CD4-positive, alpha-beta memory T cell (primary cell): ENCODE measurements at regions of chr2 and their contacts with region 1.

Region 1: DNA sequence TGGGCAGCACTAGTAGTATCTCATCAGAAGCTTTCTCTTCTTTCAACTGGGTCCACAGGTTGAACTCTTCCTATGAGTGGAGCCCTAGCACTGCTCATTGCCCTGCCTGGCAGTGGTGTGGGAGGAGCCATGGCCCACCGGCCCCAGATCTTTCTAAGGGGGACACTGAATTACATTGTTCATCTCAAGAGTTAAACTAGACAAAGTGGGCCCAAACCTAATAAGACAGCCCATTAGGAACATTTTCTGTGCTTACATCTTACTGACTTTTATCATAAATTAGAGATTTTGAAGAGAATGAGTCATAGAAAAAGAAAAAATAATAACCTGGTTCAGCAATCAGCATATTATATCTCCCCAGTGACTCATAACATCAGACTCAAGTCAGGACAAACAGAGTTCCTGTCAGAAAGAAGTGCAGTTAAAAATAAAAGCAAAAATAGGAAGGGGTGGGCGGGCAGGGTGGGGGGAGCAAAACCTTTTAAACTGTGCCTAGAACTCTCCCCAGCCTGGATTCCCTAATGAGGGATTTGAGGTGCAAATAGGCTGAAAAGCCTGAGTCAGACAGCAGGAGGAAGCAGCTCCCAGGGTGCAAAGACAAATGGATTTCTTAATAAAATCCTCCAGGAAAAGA is 161.6 kb upstream of the TRIB2 start:
- DNase-seq: peak in 2 of 5 donors; percentile 18 to 19
- H3K4me3 ChIP-seq: no peak overlapping the region
- H3K4me3 Mint-ChIP-seq: peak overlapping the region; percentile 6 to 75 (median 56)
- H3K27ac ChIP-seq: no peak overlapping the region
- H3K27ac Mint-ChIP-seq: peak overlapping the region; percentile 74 to 94 (median 87)
- H3K4me1 ChIP-seq: peaks cover 31% of the 10 kb centered on the region
- H3K4me1 Mint-ChIP-seq: peaks cover 33 to 49% (median 38%) of the 10 kb centered on the region in 4 donors
- H3K27me3 ChIP-seq: no peaks in the 10 kb centered on the region
- H3K27me3 Mint-ChIP-seq: no peaks in the 10 kb centered on the region

Region 2: GRCh38 chr2:12430407-12431133 is 124.6 kb before region 1 on chr2:
- CTCF ChIA-PET with region 1: no interaction called
- POLR2A ChIA-PET with region 1: no interaction called
- intact Hi-C with region 1: loop called (anchors 5 kb)
- DNase-seq: peak in 3 of 5 donors; percentile 9 to 26 (median 21)
- H3K4me3 ChIP-seq: peak overlapping the region in 1 of 2 donors; percentile 27
- H3K4me3 Mint-ChIP-seq: peak overlapping the region; percentile 50 to 83 (median 78)
- H3K27ac ChIP-seq: no peak overlapping the region
- H3K27ac Mint-ChIP-seq: peak overlapping the region; percentile 59 to 93 (median 88)
- H3K4me1 ChIP-seq: peaks cover 28% of the 10 kb centered on the region
- H3K4me1 Mint-ChIP-seq: peaks cover 19 to 44% (median 29%) of the 10 kb centered on the region in 4 donors
- H3K27me3 ChIP-seq: no peaks in the 10 kb centered on the region
- H3K27me3 Mint-ChIP-seq: no peaks in the 10 kb centered on the region